Left lung (tissue), 14 donors: ENCODE measurements at regions of chr7 and their contacts with region 1.

Region 1: GRCh38 chr7:137898839-137899721 is 52.3 kb upstream of the DGKI start:
- DNase-seq: peak; percentile 66 to 91 (median 80)
- ATAC-seq: peak; percentile 96
- H3K4me3 ChIP-seq: no peak overlapping the region
- H3K27ac ChIP-seq: peak overlapping the region in 1 of 2 donors; percentile 64
- H3K4me1 ChIP-seq: peaks cover 4 to 25% of the 10 kb centered on the region in 2 donors
- H3K27me3 ChIP-seq: no peaks in the 10 kb centered on the region
- CTCF ChIP-seq: peak; percentile 78 to 86

Region 2: DNA sequence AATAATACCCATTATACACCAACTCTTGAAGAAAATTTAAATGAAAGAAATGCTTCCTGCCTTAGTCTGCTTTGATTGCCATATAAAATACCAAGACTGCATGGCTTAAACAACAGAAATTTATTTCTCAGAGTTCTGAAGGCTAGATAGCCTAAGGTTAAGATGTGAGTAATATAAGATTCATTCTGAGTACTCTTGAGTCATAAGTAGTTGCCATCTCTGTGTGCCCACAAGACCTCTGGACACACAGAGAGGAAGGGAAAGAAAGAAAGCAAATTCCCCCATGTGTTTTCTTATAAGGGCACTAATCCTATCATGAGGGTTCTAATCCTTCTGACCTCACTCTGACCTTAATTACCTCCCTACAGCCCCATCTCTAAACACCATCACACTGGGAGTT is 756.7 kb before region 1 on chr7:
- intact Hi-C with region 1: no loop called
- DNase-seq: no peak
- ATAC-seq: no peak
- H3K4me3 ChIP-seq: no peak overlapping the region
- H3K27ac ChIP-seq: no peak overlapping the region
- H3K4me1 ChIP-seq: no peaks in the 10 kb centered on the region
- H3K27me3 ChIP-seq: no peaks in the 10 kb centered on the region
- CTCF ChIP-seq: no peak

Region 3: GRCh38 chr7:137656227-137656849 is 242.7 kb before region 1 on chr7:
- intact Hi-C with region 1: loop called in 1 of 2 experiments (anchors 5 kb)
- DNase-seq: peak; percentile 47 to 77 (median 72)
- ATAC-seq: peak; percentile 97
- H3K4me3 ChIP-seq: no peak overlapping the region
- H3K27ac ChIP-seq: no peak overlapping the region
- H3K4me1 ChIP-seq: peaks cover 3 to 5% of the 10 kb centered on the region in 2 donors
- H3K27me3 ChIP-seq: no peaks in the 10 kb centered on the region
- CTCF ChIP-seq: peak; percentile 73 to 81

Region 4: DNA sequence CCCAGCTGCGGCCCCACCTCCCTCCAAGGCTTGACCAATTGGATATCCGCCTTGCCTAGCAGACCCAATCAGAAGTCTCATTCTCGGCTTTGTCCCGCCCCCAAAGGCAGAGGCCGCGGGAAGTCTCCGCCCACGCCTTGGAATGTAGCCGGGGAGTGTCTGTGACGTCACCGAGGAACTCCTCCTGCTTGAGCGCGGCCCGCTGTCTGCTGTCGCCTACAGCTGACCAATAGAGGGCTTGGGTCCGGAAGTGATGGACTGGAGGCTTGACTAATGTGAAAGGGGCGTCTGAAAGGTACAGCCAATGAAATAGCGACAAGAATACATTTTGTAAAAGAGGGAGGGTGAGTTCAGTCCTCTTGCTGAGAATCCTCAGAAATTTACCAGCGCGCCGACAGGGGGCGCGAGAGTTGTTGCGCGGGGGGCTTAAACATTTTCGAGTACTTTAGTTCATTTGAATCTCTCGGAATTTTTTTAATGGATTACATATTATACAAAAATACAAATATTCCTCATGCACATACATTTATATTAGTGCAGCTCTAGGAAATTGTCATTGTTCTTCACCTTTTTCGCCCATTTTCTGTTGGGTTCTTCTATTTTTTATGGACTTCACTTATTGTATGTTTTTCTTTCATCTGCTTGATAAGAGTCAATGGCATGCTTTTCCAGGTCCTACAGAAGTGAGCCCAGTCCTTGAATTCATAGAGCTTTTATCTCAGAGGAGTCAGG is 103.2 kb after region 1 on chr7:
- intact Hi-C with region 1: loop called in 1 of 2 experiments (anchors 10 kb)
- DNase-seq: peak; percentile 96 to 100 (median 99)
- ATAC-seq: peak; percentile 94
- H3K4me3 ChIP-seq: peak overlapping the region; percentile 92 to 97
- H3K27ac ChIP-seq: peak overlapping the region; percentile 94 to 97
- H3K4me1 ChIP-seq: peaks cover 16 to 38% of the 10 kb centered on the region in 2 donors
- H3K27me3 ChIP-seq: no peaks in the 10 kb centered on the region
- CTCF ChIP-seq: peak; percentile 90 to 92

Region 5: DNA sequence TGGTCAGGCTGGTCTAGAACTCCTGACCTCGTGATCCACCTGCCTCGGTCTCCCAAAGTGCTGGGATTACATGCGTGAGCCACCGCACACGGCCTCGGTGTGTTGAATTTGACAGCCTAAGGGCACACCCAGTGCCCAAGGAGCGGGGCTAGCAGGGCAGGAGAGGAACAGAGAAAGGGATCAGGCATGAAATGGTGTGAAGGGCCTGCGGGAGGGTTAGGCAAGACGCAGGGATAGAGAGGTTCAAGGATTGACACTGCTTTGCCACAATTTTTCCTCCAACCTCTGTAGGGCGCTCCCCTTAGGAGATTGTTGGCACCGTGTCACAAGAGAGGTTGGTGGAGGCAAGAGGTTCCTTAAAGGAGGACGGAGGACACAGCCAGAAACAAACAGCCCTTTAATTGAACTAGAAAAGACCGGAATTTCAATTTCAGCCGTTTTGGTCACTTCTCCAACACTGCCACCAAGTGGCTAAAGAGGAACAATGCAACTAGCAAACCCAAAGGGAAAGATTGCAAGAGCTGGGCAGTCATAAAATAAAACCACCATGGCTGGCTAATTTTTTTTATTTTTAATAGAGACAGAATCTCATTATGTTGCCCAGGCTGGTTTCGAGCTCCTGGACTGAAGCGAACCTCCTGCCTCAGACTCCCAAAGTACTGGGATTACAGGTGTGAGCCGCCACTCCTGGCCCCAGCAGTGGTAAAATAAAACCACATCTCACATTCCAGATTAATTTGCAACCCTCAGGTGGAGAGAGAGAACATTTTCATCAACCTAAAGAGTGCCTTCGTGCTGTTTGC is 109.7 kb after region 1 on chr7:
- intact Hi-C with region 1: loop called (anchors 2 to 10 kb)
- DNase-seq: peak in 2 of 4 donors; percentile 56 to 77
- ATAC-seq: peak; percentile 94
- H3K4me3 ChIP-seq: no peak overlapping the region
- H3K27ac ChIP-seq: no peak overlapping the region
- H3K4me1 ChIP-seq: peaks cover 0 to 4% of the 10 kb centered on the region in 2 donors
- H3K27me3 ChIP-seq: no peaks in the 10 kb centered on the region
- CTCF ChIP-seq: peak; percentile 95

Region 6: DNA sequence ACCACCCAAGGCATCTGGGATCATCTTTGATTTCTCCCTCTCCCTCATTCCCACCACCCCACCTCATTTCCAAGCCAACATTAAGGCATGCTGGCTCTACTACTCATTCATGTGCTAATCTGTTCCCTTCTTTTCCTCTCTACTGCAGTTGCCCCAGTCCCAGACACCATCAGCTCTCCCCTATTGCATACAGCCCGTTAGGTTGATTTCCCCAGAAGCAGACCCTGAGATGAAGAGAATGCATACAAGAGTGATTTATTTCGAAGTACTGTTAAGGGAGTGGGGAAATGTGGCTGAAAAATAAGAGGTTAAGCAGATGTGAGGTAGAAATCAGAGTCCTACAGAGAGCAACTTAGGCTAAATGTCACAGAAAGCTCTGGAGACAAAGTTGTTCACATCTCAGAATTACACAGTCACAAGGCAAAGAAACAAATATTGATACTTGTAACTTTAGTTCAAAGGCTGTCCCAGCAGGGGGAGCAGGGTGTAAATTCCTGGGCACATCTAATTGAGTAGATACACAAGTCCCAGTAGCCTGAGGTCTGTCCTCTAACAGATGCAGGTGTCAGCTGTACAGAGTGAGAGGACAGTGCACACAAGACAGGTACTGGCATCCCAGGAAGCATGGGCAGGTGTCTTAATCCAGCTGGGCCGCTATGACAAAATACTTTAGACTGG is 198.1 kb after region 1 on chr7:
- intact Hi-C with region 1: no loop called
- DNase-seq: peak in 2 of 4 donors; percentile 4 to 7
- ATAC-seq: peak; percentile 17
- H3K4me3 ChIP-seq: no peak overlapping the region
- H3K27ac ChIP-seq: no peak overlapping the region
- H3K4me1 ChIP-seq: no peaks in the 10 kb centered on the region
- H3K27me3 ChIP-seq: no peaks in the 10 kb centered on the region
- CTCF ChIP-seq: no peak

Region 7: DNA sequence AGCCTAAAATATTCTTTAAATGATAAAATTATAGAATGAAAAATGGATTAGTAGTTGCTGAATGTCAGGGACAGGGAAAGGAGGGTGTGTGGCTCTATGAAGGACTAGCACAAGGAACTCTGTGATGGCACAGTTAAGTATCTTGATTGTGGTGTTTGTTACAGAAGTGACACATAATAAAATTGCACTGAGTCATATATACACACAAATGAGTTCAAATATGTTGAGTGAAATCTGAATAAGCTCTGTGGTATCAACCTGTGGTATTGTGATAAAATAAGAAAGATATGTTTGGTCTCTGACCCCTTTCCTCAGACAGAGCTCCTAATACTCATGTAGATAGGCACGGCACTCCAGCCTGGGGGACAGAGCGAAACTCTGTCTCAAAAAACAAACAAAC is 379.5 kb after region 1 on chr7:
- intact Hi-C with region 1: no loop called
- DNase-seq: no peak
- ATAC-seq: no peak
- H3K4me3 ChIP-seq: no peak overlapping the region
- H3K27ac ChIP-seq: no peak overlapping the region
- H3K4me1 ChIP-seq: no peaks in the 10 kb centered on the region
- H3K27me3 ChIP-seq: no peaks in the 10 kb centered on the region
- CTCF ChIP-seq: no peak